Activated CD8-positive, alpha-beta T cell treated with anti-CD3 and anti-CD28 coated beads for 36 hours (primary cell): ENCODE measurements at regions of chr20 and their contacts with region 1.

Region 1: GRCh38 chr20:34312544-34313217 is 9.5 kb upstream of the AHCY start:
- DNase-seq: peak; percentile 94
- ATAC-seq: peak; percentile 100
- H3K4me3 Mint-ChIP-seq: no peak overlapping the region
- H3K27ac Mint-ChIP-seq: no peak overlapping the region
- H3K4me1 Mint-ChIP-seq: peaks cover 4% of the 10 kb centered on the region
- H3K27me3 Mint-ChIP-seq: peaks cover 14% of the 10 kb centered on the region
- CTCF ChIP-seq: peak; percentile 100

Region 2: GRCh38 chr20:34295284-34295683 is 17.4 kb before region 1 on chr20:
- CTCF ChIA-PET with region 1: interaction called, 40 read pairs
- POLR2A ChIA-PET with region 1: no interaction called
- intact Hi-C with region 1: no loop called
- DNase-seq: no peak
- ATAC-seq: no peak
- H3K4me3 Mint-ChIP-seq: no peak overlapping the region
- H3K27ac Mint-ChIP-seq: no peak overlapping the region
- H3K4me1 Mint-ChIP-seq: peaks cover 3% of the 10 kb centered on the region
- H3K27me3 Mint-ChIP-seq: no peaks in the 10 kb centered on the region
- CTCF ChIP-seq: no peak

Region 3: DNA sequence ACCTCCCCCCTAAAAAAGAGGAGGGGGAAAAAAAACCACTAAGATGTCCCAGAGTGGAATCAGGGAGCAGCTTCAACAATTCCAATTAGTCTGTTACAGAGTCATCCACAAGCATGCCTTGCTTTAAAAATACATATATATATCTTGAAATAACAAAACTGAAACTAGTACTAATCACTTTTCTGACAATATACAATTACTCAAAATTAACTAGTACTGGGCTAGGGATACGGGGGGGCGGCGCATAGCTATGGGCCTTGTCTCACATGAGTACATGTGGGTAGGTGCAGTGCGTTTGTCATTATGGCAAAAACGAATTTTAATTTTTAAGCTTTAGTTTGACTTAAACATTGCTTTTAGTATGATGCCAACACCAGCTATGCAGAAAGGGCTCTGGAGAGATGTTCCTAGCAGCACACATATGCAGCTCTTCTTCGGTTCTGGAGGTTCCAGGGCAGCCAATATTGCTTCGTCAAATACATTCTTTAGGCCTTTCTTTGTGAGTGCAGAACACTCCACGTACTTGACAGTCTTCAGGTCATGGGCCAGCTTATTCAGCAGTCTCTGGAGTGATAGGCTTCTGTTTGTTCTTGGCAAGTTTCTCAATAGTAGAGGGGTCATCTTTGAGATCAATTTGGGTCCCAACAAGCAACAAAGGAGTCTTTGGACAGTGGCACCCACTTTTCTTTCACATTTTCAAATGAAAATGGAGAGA is 89.2 kb after region 1 on chr20:
- CTCF ChIA-PET with region 1: interaction called, 48 read pairs
- POLR2A ChIA-PET with region 1: no interaction called
- intact Hi-C with region 1: no loop called
- DNase-seq: peak; percentile 51
- ATAC-seq: peak; percentile 28
- H3K4me3 Mint-ChIP-seq: no peak overlapping the region
- H3K27ac Mint-ChIP-seq: peak overlapping the region; percentile 49
- H3K4me1 Mint-ChIP-seq: peaks cover 51% of the 10 kb centered on the region
- H3K27me3 Mint-ChIP-seq: no peaks in the 10 kb centered on the region
- CTCF ChIP-seq: no peak

Region 4: DNA sequence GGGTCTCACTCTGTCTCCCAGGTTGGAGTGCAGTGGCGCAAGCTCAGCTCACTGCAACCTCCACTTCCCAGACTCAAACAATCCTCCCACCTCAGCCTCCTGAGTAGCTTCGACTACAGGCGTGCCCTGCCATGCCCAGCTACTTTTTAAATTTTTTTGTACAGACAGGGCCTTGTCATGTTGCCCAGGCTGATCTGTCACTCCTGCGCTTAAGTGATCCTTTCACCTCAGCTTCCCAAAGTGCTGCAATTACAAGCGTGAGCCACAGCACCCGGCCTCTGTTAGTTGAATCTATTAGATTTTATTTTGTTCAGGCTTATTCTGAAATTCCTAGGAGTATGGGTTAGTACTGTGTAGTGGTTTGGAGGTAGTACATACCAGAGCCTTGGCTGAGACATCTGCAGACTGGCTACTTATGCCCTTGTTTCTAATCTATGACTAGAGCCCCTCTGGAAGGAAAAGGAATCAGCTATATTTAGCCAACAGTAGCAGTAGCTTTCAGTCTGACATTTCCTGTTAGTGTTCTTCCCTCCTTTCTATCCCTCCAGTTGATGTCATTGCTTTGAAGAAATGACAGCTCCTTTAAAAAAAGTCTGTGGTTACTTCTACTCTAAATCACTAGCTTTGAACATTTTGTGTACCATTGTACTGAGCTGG is 124.8 kb after region 1 on chr20:
- CTCF ChIA-PET with region 1: interaction called, 38 read pairs
- POLR2A ChIA-PET with region 1: interaction called, 4 read pairs
- intact Hi-C with region 1: no loop called
- DNase-seq: no peak
- ATAC-seq: no peak
- H3K4me3 Mint-ChIP-seq: no peak overlapping the region
- H3K27ac Mint-ChIP-seq: peak overlapping the region; percentile 39
- H3K4me1 Mint-ChIP-seq: peaks cover 11% of the 10 kb centered on the region
- H3K27me3 Mint-ChIP-seq: no peaks in the 10 kb centered on the region
- CTCF ChIP-seq: no peak

Region 5: DNA sequence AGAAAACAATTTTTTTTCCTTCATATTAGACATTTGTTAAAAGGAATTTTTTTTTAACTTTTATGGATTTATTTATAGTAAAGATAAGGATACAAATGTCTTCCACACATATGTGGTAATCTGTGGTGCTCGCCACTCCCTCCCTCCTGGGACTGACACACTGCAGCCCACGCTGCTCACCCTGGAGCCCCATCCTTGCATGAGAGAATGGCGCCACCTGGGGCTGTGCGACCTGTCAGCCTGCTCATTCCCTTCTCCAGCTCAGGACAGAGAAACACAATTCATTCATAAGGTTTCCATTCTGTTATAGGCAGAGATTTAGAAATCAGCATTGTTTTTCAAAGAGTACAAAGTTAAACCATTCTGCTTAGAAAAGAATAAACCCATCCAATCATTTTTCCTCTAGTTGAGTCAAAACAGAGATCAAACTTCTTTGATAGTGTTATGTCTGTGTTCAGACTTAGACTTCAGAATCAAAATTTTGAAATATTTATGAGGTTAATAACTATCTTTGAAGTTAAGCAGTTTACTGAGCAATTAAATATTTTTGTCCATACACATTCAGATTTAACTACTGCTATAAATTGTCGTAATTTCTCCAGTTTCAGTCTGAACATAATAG is 160.7 kb after region 1 on chr20:
- CTCF ChIA-PET with region 1: interaction called, 40 read pairs
- POLR2A ChIA-PET with region 1: no interaction called
- intact Hi-C with region 1: loop called (anchors 2 kb)
- DNase-seq: peak; percentile 66
- ATAC-seq: peak; percentile 67
- H3K4me3 Mint-ChIP-seq: no peak overlapping the region
- H3K27ac Mint-ChIP-seq: no peak overlapping the region
- H3K4me1 Mint-ChIP-seq: peaks cover 15% of the 10 kb centered on the region
- H3K27me3 Mint-ChIP-seq: no peaks in the 10 kb centered on the region
- CTCF ChIP-seq: peak; percentile 38

Region 6: GRCh38 chr20:34516247-34517113 is 203.8 kb after region 1 on chr20 and contains the start of gene DYNLRB1:
- CTCF ChIA-PET with region 1: interaction called, 114 read pairs
- POLR2A ChIA-PET with region 1: interaction called, 3 read pairs
- intact Hi-C with region 1: no loop called
- DNase-seq: peak; percentile 98
- ATAC-seq: peak; percentile 82
- H3K4me3 Mint-ChIP-seq: peak within 1 kb of the TSS; percentile 98
- H3K27ac Mint-ChIP-seq: peak within 1 kb of the TSS; percentile 96
- H3K4me1 Mint-ChIP-seq: peaks cover 48% of the 10 kb centered on the region
- H3K27me3 Mint-ChIP-seq: no peaks in the 10 kb centered on the region
- CTCF ChIP-seq: no peak
- total RNA-seq, gene DYNLRB1: 66.6 to 70.9 TPM

Region 7: DNA sequence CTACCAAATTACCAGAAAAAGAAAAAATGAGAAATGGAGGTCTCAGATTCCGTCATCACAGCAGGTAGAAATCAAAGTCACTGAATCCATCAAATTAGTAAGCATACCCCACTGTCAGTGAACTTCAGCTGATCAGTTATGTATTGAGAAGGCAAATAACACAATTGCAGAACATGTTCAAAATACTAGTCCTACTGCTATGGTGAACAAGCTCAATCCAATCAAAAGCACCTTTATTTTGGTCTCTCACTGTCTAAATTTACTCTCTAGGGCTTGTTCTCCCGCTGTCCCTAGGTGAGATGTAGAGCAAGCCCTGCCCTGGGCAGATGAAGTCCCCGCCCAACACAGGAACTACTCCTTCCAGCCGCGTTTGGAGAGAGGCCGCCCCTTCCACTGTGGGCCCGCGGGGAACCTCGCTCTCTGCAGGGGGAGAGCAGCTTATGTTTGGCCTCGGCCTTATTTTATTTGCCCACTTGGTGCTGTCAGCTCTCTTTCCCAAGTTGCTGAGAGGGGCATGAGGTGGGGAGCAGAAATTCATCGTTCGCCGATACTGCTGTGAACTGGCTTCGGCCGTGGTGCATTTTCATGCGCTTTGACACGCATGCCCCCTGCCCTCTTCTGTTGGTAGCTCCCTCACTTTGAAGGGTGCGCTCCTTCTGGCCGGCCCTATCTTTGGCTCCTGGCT is 231.6 kb after region 1 on chr20:
- CTCF ChIA-PET with region 1: interaction called, 17 read pairs
- POLR2A ChIA-PET with region 1: no interaction called
- intact Hi-C with region 1: no loop called
- DNase-seq: peak; percentile 40
- ATAC-seq: peak; percentile 87
- H3K4me3 Mint-ChIP-seq: peak overlapping the region; percentile 34
- H3K27ac Mint-ChIP-seq: no peak overlapping the region
- H3K4me1 Mint-ChIP-seq: peaks cover 16% of the 10 kb centered on the region
- H3K27me3 Mint-ChIP-seq: peaks cover 4% of the 10 kb centered on the region
- CTCF ChIP-seq: no peak